Activated CD4-positive, alpha-beta T cell treated with anti-CD3 and anti-CD28 coated beads for 36 hours (primary cell): ENCODE measurements at regions of chr2 and their contacts with region 1.

Region 1: DNA sequence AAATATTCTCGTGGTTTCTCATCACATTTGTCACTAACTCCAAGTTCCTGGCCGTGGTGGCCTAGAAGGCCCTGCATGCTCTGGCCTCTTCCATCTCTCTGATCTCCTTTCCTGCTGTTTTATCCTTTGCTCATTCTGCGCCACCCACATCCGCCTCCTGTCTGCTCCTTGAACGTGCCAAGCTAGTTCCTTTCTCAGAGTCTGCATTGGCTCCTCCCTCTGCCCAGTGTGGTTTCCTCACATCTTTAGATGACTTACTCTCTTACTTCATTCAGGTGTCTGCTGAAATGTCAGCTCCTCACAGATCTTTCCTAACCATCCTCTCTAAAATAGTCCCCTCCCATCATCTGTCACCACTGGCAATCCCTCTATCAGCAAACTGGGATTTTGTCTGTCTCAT is 158.6 kb upstream of the RBMS1 start:
- DNase-seq: peak; percentile 84
- ATAC-seq: peak; percentile 98
- H3K4me3 Mint-ChIP-seq: peak overlapping the region; percentile 10
- H3K27ac Mint-ChIP-seq: peak overlapping the region; percentile 59
- H3K4me1 Mint-ChIP-seq: peaks cover 29% of the 10 kb centered on the region
- H3K27me3 Mint-ChIP-seq: no peaks in the 10 kb centered on the region

Region 2: DNA sequence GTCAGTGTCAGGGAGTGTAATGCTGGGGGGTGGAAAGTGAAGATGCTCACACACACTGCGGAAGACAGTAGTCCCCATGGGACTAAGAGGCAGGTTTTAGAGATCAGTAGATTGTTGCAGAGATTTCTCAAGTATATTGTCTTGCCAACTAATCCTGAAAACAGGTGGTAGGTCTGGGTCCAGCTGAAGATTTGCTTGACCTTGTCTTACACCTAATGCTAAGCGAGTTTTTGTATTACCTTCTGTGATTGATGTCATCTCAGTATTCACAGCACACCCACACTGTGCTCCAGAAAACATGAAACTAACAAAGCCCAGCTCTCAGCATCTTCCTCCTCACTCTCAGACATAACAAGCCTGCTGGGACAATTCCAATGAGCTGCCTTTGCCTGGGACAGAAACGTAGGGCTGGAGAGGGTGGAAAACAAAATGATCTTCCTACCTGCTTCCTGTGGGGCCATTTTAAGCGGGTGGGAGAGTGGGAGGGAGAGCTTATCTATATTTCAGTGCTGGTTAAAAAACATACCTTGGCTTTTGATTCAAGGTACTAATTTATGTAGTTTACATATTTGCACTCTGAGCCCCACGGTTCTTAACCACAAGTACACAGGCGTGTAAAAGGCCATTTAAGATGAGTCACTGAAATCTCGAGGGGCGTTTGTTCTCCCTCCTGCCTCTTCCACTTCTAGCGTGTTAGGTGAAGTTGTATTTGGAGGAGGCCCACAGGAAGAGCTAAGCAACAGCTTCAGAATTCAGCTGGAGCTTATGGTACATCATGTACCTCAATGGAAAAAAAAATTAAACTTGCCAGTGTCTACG is 135.5 kb before region 1 on chr2:
- CTCF ChIA-PET with region 1: no interaction called
- POLR2A ChIA-PET with region 1: no interaction called
- intact Hi-C with region 1: loop called in 1 of 2 experiments (anchors 5 kb)
- DNase-seq: peak; percentile 40
- ATAC-seq: peak; percentile 82
- H3K4me3 Mint-ChIP-seq: peak overlapping the region; percentile 32
- H3K27ac Mint-ChIP-seq: peak overlapping the region; percentile 69
- H3K4me1 Mint-ChIP-seq: peaks cover 36% of the 10 kb centered on the region
- H3K27me3 Mint-ChIP-seq: no peaks in the 10 kb centered on the region

Region 3: DNA sequence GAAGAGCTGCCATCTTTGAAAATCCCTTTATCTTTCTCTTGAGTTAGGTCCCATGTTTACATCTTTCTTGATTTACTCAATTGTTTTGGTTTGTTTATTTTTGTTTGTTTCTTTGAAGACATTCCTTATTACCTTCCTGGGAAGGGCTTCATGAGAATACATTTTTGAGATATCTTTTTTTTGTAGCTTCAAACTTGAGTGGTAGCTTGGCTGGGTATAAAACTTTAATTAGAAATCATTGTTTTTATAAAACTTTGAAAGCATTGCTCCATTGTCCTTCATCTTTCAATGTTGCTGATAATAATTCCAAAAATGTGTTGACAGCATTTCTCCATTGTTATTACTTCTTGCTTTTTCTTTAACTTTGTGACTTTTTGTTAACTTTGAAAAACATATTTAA is 12.8 kb before region 1 on chr2:
- CTCF ChIA-PET with region 1: no interaction called
- POLR2A ChIA-PET with region 1: no interaction called
- intact Hi-C with region 1: no loop called
- DNase-seq: no peak
- ATAC-seq: no peak
- H3K4me3 Mint-ChIP-seq: no peak overlapping the region
- H3K27ac Mint-ChIP-seq: no peak overlapping the region
- H3K4me1 Mint-ChIP-seq: peaks cover 4% of the 10 kb centered on the region
- H3K27me3 Mint-ChIP-seq: no peaks in the 10 kb centered on the region